B cell (primary cell): ENCODE measurements at regions of chr16 and their contacts with region 1.

Region 1: DNA sequence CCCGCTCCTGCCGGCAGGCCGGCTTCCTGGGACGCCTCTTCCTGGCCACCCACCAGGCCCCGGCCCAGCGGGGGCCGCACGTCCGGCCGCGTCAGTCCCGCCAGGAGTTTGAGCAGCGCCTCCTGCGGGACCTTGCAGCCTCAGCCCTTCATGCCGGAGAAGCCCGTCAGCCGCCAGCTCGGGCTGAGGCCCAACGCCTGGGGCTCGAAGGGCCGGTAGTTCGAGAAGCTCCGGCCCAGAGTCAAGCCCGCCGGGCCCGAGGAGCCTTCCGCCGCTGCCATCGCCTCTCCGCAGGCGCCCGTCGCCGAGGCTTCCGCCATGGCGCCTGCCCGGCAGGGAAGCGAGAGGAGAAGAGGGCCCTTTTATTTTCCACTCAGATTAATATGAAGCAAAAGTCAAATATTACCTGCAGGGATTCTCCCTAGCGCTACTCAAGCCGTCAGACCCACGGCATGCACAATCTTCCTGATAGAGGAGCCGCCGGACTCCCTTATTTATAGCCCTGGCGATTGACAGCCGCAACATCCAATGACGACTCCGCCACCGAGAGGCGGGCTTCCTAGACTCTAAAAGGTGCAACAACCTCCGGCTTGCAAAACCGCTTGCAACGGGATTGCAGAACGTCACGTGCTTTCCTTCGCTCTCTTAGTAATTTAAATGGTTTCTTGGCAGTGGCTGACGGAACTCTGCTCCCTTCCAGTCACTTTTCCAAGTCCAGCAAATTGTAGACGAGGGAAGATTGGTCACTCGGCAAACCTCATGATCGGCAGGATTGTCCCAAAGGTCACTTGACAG is at the start of gene SEPHS2:
- DNase-seq: peak; percentile 96
- ATAC-seq: peak; percentile 96
- H3K4me3 ChIP-seq: peak within 1 kb of the TSS; percentile 74 to 99 (median 78)
- H3K4me3 Mint-ChIP-seq: peak within 1 kb of the TSS; percentile 96
- H3K27ac ChIP-seq: peak within 1 kb of the TSS; percentile 78 to 85
- H3K27ac Mint-ChIP-seq: peak within 1 kb of the TSS; percentile 97
- H3K4me1 ChIP-seq: peaks cover 29 to 36% of the 10 kb centered on the region in 2 donors
- H3K4me1 Mint-ChIP-seq: peaks cover 42% of the 10 kb centered on the region
- H3K27me3 ChIP-seq: no peaks in the 10 kb centered on the region
- H3K27me3 Mint-ChIP-seq: no peaks in the 10 kb centered on the region
- CTCF ChIP-seq: peak; percentile 47
- total RNA-seq, gene SEPHS2: 62.2 and 63.2 TPM in 2 replicates

Region 2: DNA sequence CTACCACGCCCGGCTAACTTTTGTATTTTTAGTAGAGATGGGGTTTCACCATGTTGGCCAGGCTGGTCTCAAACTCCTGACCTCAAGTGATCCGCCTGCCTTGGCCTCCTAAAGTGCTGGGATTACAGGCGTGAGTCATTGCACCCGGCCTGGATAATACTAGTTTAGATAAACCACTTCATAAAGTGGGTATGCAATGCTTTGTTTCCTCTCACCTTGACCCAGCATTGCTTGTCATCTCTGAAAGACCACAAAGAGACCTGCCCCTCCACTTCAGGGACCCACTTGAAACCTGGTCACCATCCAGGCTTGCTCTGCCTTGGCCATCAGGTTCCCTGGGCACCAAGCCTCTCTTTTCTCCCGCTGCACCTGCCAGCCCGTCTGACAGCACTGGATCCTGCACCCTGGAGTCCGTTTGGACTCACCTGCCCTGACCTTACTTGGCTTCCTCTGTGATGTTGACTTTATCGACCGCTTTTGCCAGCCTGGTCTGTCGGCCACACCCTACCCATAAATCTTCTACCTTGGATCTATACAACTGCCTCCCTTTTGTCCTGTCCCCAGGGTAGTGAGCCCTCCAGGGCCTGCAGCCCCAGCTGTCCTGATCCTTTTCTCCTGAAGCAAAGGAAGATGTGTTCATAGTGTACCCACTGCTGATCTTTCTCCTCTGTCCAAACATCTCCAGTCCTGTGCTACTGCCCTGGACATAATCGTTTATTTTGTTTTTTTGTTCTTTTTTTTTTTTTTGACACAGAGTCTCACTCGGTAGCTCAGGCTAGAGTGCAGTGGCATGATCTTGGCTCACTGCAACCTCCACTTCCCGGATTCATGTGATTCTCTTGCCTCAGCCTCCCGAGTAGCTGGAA is 680.2 kb before region 1 on chr16:
- CTCF ChIA-PET with region 1: no interaction called
- POLR2A ChIA-PET with region 1: no interaction called
- intact Hi-C with region 1: no loop called
- DNase-seq: no peak
- ATAC-seq: no peak
- H3K4me3 ChIP-seq: no peak overlapping the region
- H3K4me3 Mint-ChIP-seq: no peak overlapping the region
- H3K27ac ChIP-seq: no peak overlapping the region
- H3K27ac Mint-ChIP-seq: no peak overlapping the region
- H3K4me1 ChIP-seq: peaks cover 0 to 3% of the 10 kb centered on the region in 2 donors
- H3K4me1 Mint-ChIP-seq: no peaks in the 10 kb centered on the region
- H3K27me3 ChIP-seq: no peaks in the 10 kb centered on the region
- H3K27me3 Mint-ChIP-seq: no peaks in the 10 kb centered on the region
- CTCF ChIP-seq: no peak

Region 3: GRCh38 chr16:30378236-30379204 is 67.1 kb before region 1 on chr16:
- CTCF ChIA-PET with region 1: no interaction called
- POLR2A ChIA-PET with region 1: no interaction called
- intact Hi-C with region 1: no loop called
- DNase-seq: peak; percentile 99
- ATAC-seq: peak; percentile 85
- H3K4me3 ChIP-seq: peak overlapping the region; percentile 42 to 87 (median 68)
- H3K4me3 Mint-ChIP-seq: peak overlapping the region; percentile 94
- H3K27ac ChIP-seq: peak overlapping the region; percentile 97 to 100
- H3K27ac Mint-ChIP-seq: peak overlapping the region; percentile 100
- H3K4me1 ChIP-seq: peaks cover 34 to 64% of the 10 kb centered on the region in 2 donors
- H3K4me1 Mint-ChIP-seq: peaks cover 50% of the 10 kb centered on the region
- H3K27me3 ChIP-seq: no peaks in the 10 kb centered on the region
- H3K27me3 Mint-ChIP-seq: no peaks in the 10 kb centered on the region
- CTCF ChIP-seq: no peak

Region 4: GRCh38 chr16:30429678-30430427 is 15.8 kb before region 1 on chr16 and contains the start of gene DCTPP1:
- CTCF ChIA-PET with region 1: interaction called, 35 read pairs
- POLR2A ChIA-PET with region 1: interaction called, 7 read pairs
- intact Hi-C with region 1: loop called (anchors 1 kb)
- DNase-seq: peak; percentile 99
- ATAC-seq: peak; percentile 97
- H3K4me3 ChIP-seq: peak within 1 kb of the TSS; percentile 78 to 98 (median 85)
- H3K4me3 Mint-ChIP-seq: no peak within 1 kb of the TSS
- H3K27ac ChIP-seq: peak within 1 kb of the TSS; percentile 79 to 86
- H3K27ac Mint-ChIP-seq: peak within 1 kb of the TSS; percentile 20
- H3K4me1 ChIP-seq: peaks cover 12 to 21% of the 10 kb centered on the region in 2 donors
- H3K4me1 Mint-ChIP-seq: peaks cover 17% of the 10 kb centered on the region
- H3K27me3 ChIP-seq: no peaks in the 10 kb centered on the region
- H3K27me3 Mint-ChIP-seq: no peaks in the 10 kb centered on the region
- CTCF ChIP-seq: peak; percentile 82
- total RNA-seq, gene DCTPP1: 25.0 and 28.9 TPM in 2 replicates

Region 5: GRCh38 chr16:30472328-30472942 is 26.8 kb after region 1 on chr16 and contains the start of gene ITGAL:
- CTCF ChIA-PET with region 1: interaction called, 77 read pairs
- POLR2A ChIA-PET with region 1: interaction called, 14 read pairs
- intact Hi-C with region 1: loop called (anchors 2 kb)
- DNase-seq: peak; percentile 83
- ATAC-seq: peak; percentile 69
- H3K4me3 ChIP-seq: peak within 1 kb of the TSS; percentile 39 to 76 (median 59)
- H3K4me3 Mint-ChIP-seq: peak within 1 kb of the TSS; percentile 83
- H3K27ac ChIP-seq: peak within 1 kb of the TSS; percentile 70 to 82
- H3K27ac Mint-ChIP-seq: peak within 1 kb of the TSS; percentile 91
- H3K4me1 ChIP-seq: peaks cover 42 to 48% of the 10 kb centered on the region in 2 donors
- H3K4me1 Mint-ChIP-seq: peaks cover 47% of the 10 kb centered on the region
- H3K27me3 ChIP-seq: no peaks in the 10 kb centered on the region
- H3K27me3 Mint-ChIP-seq: no peaks in the 10 kb centered on the region
- CTCF ChIP-seq: no peak
- total RNA-seq, gene ITGAL: 176 and 184 TPM in 2 replicates

Region 6: GRCh38 chr16:30491744-30492308 is 46.2 kb after region 1 on chr16:
- CTCF ChIA-PET with region 1: interaction called, 6 read pairs
- POLR2A ChIA-PET with region 1: no interaction called
- intact Hi-C with region 1: loop called (anchors 5 kb)
- DNase-seq: no peak
- ATAC-seq: no peak
- H3K4me3 ChIP-seq: no peak overlapping the region
- H3K4me3 Mint-ChIP-seq: no peak overlapping the region
- H3K27ac ChIP-seq: no peak overlapping the region
- H3K27ac Mint-ChIP-seq: peak overlapping the region; percentile 42
- H3K4me1 ChIP-seq: no peaks in the 10 kb centered on the region
- H3K4me1 Mint-ChIP-seq: no peaks in the 10 kb centered on the region
- H3K27me3 ChIP-seq: no peaks in the 10 kb centered on the region
- H3K27me3 Mint-ChIP-seq: no peaks in the 10 kb centered on the region
- CTCF ChIP-seq: no peak

Region 7: GRCh38 chr16:30602616-30603277 is 157.1 kb after region 1 on chr16:
- CTCF ChIA-PET with region 1: interaction called, 22 read pairs
- POLR2A ChIA-PET with region 1: no interaction called
- intact Hi-C with region 1: no loop called
- DNase-seq: no peak
- ATAC-seq: no peak
- H3K4me3 ChIP-seq: no peak overlapping the region
- H3K4me3 Mint-ChIP-seq: no peak overlapping the region
- H3K27ac ChIP-seq: no peak overlapping the region
- H3K27ac Mint-ChIP-seq: no peak overlapping the region
- H3K4me1 ChIP-seq: no peaks in the 10 kb centered on the region
- H3K4me1 Mint-ChIP-seq: peaks cover 3% of the 10 kb centered on the region
- H3K27me3 ChIP-seq: no peaks in the 10 kb centered on the region
- H3K27me3 Mint-ChIP-seq: no peaks in the 10 kb centered on the region
- CTCF ChIP-seq: no peak

Region 8: GRCh38 chr16:30644334-30644830 is 198.8 kb after region 1 on chr16:
- CTCF ChIA-PET with region 1: no interaction called
- POLR2A ChIA-PET with region 1: no interaction called
- intact Hi-C with region 1: no loop called
- DNase-seq: no peak
- ATAC-seq: no peak
- H3K4me3 ChIP-seq: no peak overlapping the region
- H3K4me3 Mint-ChIP-seq: no peak overlapping the region
- H3K27ac ChIP-seq: no peak overlapping the region
- H3K27ac Mint-ChIP-seq: no peak overlapping the region
- H3K4me1 ChIP-seq: peaks cover 0 to 2% of the 10 kb centered on the region in 2 donors
- H3K4me1 Mint-ChIP-seq: no peaks in the 10 kb centered on the region
- H3K27me3 ChIP-seq: no peaks in the 10 kb centered on the region
- H3K27me3 Mint-ChIP-seq: no peaks in the 10 kb centered on the region
- CTCF ChIP-seq: no peak

Region 9: DNA sequence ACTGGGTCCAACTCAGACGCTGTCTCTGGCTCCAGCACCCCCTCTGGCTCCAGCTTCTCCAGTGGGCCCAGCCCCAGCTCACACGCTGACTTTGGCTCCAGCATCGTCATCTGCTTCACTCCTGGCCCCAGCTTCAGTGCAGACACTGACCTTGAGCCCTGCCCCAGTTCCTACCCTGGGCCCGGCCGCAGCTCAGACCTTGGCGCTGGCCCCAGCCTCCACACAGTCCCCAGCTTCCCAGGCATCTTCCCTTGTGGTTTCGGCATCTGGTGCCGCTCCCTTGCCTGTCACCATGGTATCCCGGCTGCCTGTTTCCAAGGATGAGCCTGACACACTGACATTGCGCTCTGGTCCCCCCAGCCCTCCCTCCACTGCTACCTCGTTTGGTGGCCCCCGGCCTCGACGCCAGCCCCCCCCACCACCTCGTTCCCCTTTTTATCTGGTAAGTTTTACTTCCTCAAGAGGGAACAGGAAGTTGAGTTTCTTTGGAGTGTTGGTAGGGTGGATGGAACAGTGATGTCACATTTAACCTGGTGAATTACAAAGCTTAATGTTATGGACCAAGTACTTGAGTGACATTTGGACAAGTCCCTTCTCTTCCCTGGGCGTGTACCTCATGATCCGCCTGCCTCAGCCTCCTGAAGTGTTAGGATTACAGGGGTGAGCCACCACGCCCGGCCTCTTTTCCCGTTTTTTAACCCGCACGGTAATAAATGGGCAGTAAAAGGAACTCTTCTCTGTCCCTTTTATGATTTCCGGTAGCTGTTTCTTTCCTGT is 279.2 kb after region 1 on chr16:
- CTCF ChIA-PET with region 1: no interaction called
- POLR2A ChIA-PET with region 1: no interaction called
- intact Hi-C with region 1: no loop called
- DNase-seq: peak; percentile 55
- ATAC-seq: peak; percentile 39
- H3K4me3 ChIP-seq: no peak overlapping the region
- H3K4me3 Mint-ChIP-seq: no peak overlapping the region
- H3K27ac ChIP-seq: peak overlapping the region; percentile 26 to 68
- H3K27ac Mint-ChIP-seq: peak overlapping the region; percentile 6
- H3K4me1 ChIP-seq: peaks cover 6 to 9% of the 10 kb centered on the region in 2 donors
- H3K4me1 Mint-ChIP-seq: peaks cover 14% of the 10 kb centered on the region
- H3K27me3 ChIP-seq: no peaks in the 10 kb centered on the region
- H3K27me3 Mint-ChIP-seq: no peaks in the 10 kb centered on the region
- CTCF ChIP-seq: no peak